GM12878 (cell line): ENCODE measurements at regions of chr15 and their contacts with region 1.

Region 1: DNA sequence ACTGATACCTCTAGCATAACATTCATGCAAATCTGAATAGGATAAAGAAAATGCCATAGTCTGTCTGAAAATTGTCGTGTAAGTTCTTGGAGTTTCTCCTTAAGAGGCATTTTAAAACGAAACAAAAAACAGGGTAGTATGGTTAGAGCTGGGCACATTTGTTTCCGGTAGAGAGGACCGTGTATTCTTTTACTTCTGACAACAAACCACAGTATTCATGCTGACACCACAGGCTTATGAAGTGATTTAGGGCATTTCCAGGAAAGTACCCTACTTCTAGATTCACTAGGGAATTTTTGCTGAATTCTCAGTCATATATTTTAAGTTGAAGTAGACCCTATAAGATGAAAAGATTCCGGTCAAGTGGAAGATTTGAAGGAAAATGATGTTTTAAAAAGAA is 541.3 kb downstream of the UNC13C start:
- DNase-seq: peak; percentile 52
- ATAC-seq: peak; percentile 74
- H3K4me3 ChIP-seq: no peak overlapping the region
- H3K27ac ChIP-seq: peak overlapping the region; percentile 22; the same call in 1 of the 2 replicates
- H3K4me1 ChIP-seq: no peaks in the 10 kb centered on the region
- H3K27me3 ChIP-seq: no peaks in the 10 kb centered on the region
- CTCF ChIP-seq: no peak
- EP300 ChIP-seq: peak; percentile 42 to 53; a peak in 2 of 4 replicates
- POLR2A ChIP-seq: no peak
- RAD21 ChIP-seq: no peak

Region 2: DNA sequence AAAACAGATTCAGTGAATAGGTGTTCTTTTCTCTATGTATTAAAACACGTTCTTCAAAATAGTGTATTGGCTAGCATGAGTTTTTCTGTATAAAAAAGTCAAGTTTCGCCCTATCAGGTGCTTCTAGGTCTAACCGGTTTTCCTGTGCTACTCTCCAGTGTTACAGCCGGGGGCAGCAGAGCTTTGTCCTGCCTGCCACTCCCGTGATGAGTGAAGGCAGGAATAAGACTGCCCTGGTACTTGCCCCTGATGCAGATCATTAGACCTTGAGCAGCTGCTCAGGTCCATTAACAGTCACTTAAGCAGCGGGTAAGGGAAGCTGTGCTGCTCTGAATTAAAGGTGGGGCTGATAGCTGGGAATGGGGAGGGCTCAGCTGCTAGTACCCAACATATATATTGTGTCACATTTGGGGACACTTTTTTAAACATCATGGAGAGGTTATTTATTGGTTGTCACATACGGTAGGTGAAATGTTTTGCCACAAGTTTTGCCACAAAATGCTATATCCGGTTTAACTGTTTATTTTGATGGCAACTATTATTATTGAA is 542.7 kb before region 1 on chr15:
- CTCF ChIA-PET with region 1: interaction called, 5 read pairs
- POLR2A ChIA-PET with region 1: interaction called, 3 read pairs
- RAD21 ChIA-PET with region 1: interaction called, 18 read pairs
- SMC1A ChIA-PET with region 1: interaction called, 12 read pairs
- in situ Hi-C with region 1: loop called (anchors 10 kb)
- intact Hi-C with region 1: loop called (anchors 5 kb)
- DNase-seq: no peak
- ATAC-seq: peak; percentile 72
- H3K4me3 ChIP-seq: no peak overlapping the region
- H3K27ac ChIP-seq: no peak overlapping the region
- H3K4me1 ChIP-seq: no peaks in the 10 kb centered on the region
- H3K27me3 ChIP-seq: no peaks in the 10 kb centered on the region
- CTCF ChIP-seq: peak in 2 of 3 experiments; percentile 34 to 62; a peak in 2 of 6 replicates
- EP300 ChIP-seq: no peak
- POLR2A ChIP-seq: no peak
- RAD21 ChIP-seq: peak; percentile 24; the same call in 1 of the 2 replicates

Region 3: DNA sequence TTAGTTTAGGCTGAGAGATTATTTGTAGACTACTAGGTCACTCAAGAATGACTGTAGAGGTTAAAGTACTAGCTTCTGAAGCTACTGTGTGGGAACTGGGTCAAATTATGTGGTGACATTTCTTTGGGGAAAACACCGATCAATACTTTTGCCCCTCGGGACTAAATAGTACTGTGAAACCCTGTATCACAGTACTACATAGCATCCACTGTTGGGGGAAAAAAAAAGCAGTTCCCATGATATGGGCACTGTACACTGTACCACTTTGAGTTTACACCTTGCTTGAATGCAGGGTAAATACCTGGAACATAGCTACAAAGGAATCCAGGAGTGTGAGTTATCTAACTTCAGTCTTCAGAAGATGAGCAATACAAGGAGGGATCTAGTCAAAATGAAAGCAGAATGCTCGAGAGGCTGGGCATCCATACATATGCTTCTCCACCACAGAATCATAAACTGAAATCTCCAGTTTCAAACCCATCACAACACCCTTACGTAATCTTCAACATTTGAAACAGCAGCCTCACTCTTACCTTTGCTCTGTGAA is 229.9 kb before region 1 on chr15:
- CTCF ChIA-PET with region 1: no interaction called
- POLR2A ChIA-PET with region 1: interaction called, 4 read pairs
- RAD21 ChIA-PET with region 1: interaction called, 52 read pairs
- SMC1A ChIA-PET with region 1: interaction called, 25 read pairs
- in situ Hi-C with region 1: no loop called
- intact Hi-C with region 1: loop called (anchors 5 kb)
- DNase-seq: peak; percentile 77
- ATAC-seq: peak; percentile 85
- H3K4me3 ChIP-seq: no peak overlapping the region
- H3K27ac ChIP-seq: no peak overlapping the region
- H3K4me1 ChIP-seq: no peaks in the 10 kb centered on the region
- H3K27me3 ChIP-seq: no peaks in the 10 kb centered on the region
- CTCF ChIP-seq: no peak
- EP300 ChIP-seq: peak; percentile 75 to 91; a peak in 3 of 4 replicates
- POLR2A ChIP-seq: no peak
- RAD21 ChIP-seq: no peak

Region 4: GRCh38 chr15:54347082-54347827 is 172.3 kb before region 1 on chr15:
- CTCF ChIA-PET with region 1: no interaction called
- POLR2A ChIA-PET with region 1: interaction called, 5 read pairs
- RAD21 ChIA-PET with region 1: interaction called, 19 read pairs
- SMC1A ChIA-PET with region 1: interaction called, 12 read pairs
- in situ Hi-C with region 1: no loop called
- intact Hi-C with region 1: loop called (anchors 2 kb)
- DNase-seq: peak; percentile 40
- ATAC-seq: peak; percentile 88
- H3K4me3 ChIP-seq: no peak overlapping the region
- H3K27ac ChIP-seq: no peak overlapping the region
- H3K4me1 ChIP-seq: no peaks in the 10 kb centered on the region
- H3K27me3 ChIP-seq: no peaks in the 10 kb centered on the region
- CTCF ChIP-seq: no peak
- EP300 ChIP-seq: peak; percentile 86 to 90
- POLR2A ChIP-seq: no peak
- RAD21 ChIP-seq: peak; percentile 12; the same call in 1 of the 2 replicates

Region 5: GRCh38 chr15:54481819-54482218 is 37.8 kb before region 1 on chr15:
- CTCF ChIA-PET with region 1: interaction called, 5 read pairs
- POLR2A ChIA-PET with region 1: no interaction called
- RAD21 ChIA-PET with region 1: interaction called, 8 read pairs
- SMC1A ChIA-PET with region 1: interaction called, 19 read pairs
- in situ Hi-C with region 1: no loop called
- intact Hi-C with region 1: no loop called
- DNase-seq: no peak
- ATAC-seq: peak; percentile 80
- H3K4me3 ChIP-seq: no peak overlapping the region
- H3K27ac ChIP-seq: no peak overlapping the region
- H3K4me1 ChIP-seq: no peaks in the 10 kb centered on the region
- H3K27me3 ChIP-seq: no peaks in the 10 kb centered on the region
- CTCF ChIP-seq: peak in 2 of 3 experiments; percentile 13 to 33; a peak in 2 of 6 replicates
- EP300 ChIP-seq: no peak
- POLR2A ChIP-seq: no peak
- RAD21 ChIP-seq: peak; percentile 35

Region 6: GRCh38 chr15:54577476-54578250 is 58.1 kb after region 1 on chr15:
- CTCF ChIA-PET with region 1: interaction called, 12 read pairs
- POLR2A ChIA-PET with region 1: interaction called, 32 read pairs
- RAD21 ChIA-PET with region 1: interaction called, 85 read pairs
- SMC1A ChIA-PET with region 1: interaction called, 150 read pairs
- in situ Hi-C with region 1: no loop called
- intact Hi-C with region 1: no loop called
- DNase-seq: no peak
- ATAC-seq: no peak
- H3K4me3 ChIP-seq: no peak overlapping the region
- H3K27ac ChIP-seq: no peak overlapping the region
- H3K4me1 ChIP-seq: 0 out of 2 replicates have a peak, but pooled peaks cover 3% of the 10 kb centered on the region
- H3K27me3 ChIP-seq: no peaks in the 10 kb centered on the region
- CTCF ChIP-seq: no peak
- EP300 ChIP-seq: no peak
- POLR2A ChIP-seq: no peak
- RAD21 ChIP-seq: no peak

Region 7: DNA sequence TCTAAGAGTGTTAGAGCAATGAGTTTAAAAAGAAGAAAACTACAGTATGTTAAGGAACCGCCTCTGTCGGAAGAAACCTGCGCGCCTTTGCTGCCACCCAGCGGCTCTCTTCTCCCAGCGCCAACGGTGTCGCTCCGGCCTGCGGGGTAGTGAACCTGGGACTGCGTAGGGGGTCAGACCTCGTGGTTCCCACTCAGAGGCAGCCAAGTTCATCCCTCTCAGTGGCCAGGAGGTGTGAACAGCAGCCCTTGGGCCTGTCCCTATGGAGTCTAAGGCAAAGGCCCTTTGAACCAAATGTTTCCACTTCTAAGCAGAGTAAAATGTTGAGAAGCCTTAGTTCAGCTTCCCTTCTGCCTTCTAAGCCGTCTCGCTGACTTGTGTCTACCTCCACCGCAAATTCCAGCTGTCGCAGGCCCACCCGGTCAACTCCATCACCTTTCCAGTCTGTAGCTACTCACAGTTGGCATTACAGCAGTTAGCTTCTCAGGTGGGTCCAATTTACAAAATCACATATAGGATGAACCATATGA is 771.0 kb after region 1 on chr15:
- CTCF ChIA-PET with region 1: no interaction called
- POLR2A ChIA-PET with region 1: no interaction called
- RAD21 ChIA-PET with region 1: no interaction called
- SMC1A ChIA-PET with region 1: no interaction called
- in situ Hi-C with region 1: no loop called
- intact Hi-C with region 1: loop called (anchors 10 kb)
- DNase-seq: no peak
- ATAC-seq: peak; percentile 83
- H3K4me3 ChIP-seq: peak overlapping the region; percentile 89; the same call in 1 of the 2 replicates
- H3K27ac ChIP-seq: no peak overlapping the region; the same call in 1 of the 2 replicates
- H3K4me1 ChIP-seq: no peaks in the 10 kb centered on the region; the same call in 1 of the 2 replicates
- H3K27me3 ChIP-seq: no peaks in the 10 kb centered on the region
- CTCF ChIP-seq: peak; percentile 90 to 97 (median 92)
- EP300 ChIP-seq: no peak; a peak in 1 of 4 replicates
- POLR2A ChIP-seq: no peak
- RAD21 ChIP-seq: peak; percentile 96